Esophagus muscularis mucosa (tissue), 4 donors: ENCODE measurements at regions of chr1 and their contacts with region 1.

Region 1: DNA sequence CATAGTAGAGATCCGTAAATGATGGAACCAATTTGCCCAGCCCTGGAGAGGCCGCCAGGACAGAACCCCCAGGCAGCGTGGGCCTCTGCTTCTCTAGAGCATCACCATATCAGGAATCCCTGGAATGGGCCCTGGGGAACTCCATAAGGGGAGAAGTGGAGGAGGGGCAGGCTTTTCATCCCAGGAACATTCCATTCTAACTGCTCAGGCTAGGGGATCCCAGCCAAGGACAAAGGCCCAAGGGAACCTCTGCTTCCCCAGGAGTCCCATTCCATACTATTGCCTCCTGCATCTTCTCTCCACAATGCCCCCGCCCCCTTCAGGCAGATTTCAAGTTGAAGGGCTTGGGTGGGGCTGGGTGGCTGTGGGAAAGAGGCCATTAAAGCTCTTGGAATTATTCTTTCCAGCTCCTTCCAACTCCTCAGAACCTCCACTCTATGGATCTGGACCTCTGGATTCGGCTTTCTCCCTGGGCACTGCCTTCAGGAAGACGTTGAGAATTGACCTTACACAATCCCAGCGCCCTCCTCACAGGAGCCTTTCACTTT is 6.0 kb downstream of the TRNP1 start:
- DNase-seq: peak; percentile 95
- H3K4me3 ChIP-seq: peak overlapping the region in 2 of 4 donors; percentile 3 to 22
- H3K27ac ChIP-seq: peak overlapping the region; percentile 93 to 97 (median 95)
- H3K4me1 ChIP-seq: peaks cover 73 to 100% (median 100%) of the 10 kb centered on the region in 4 donors
- H3K27me3 ChIP-seq: no peaks in the 10 kb centered on the region
- CTCF ChIP-seq: peak in 1 of 3 experiments; percentile 14
- EP300 ChIP-seq: peak; percentile 72
- POLR2A ChIP-seq: no peak

Region 2: GRCh38 chr1:27031235-27032118 is 32.0 kb after region 1 on chr1:
- intact Hi-C with region 1: loop called (anchors 2 kb)
- DNase-seq: no peak
- H3K4me3 ChIP-seq: peak overlapping the region; percentile 37 to 50 (median 43)
- H3K27ac ChIP-seq: peak overlapping the region; percentile 76 to 79 (median 78)
- H3K4me1 ChIP-seq: peaks cover 15 to 35% (median 33%) of the 10 kb centered on the region in 4 donors
- H3K27me3 ChIP-seq: no peaks in the 10 kb centered on the region
- CTCF ChIP-seq: no peak
- EP300 ChIP-seq: peak; percentile 54
- POLR2A ChIP-seq: peak; percentile 15